Posterior vena cava (tissue), 2 donors: ENCODE measurements at regions of chr13 and their contacts with region 1.

Region 1: GRCh38 chr13:99176309-99177276 is 24.1 kb upstream of the UBAC2 start:
- DNase-seq: peak; percentile 89

Region 2: GRCh38 chr13:98977568-98978265 is 198.9 kb before region 1 on chr13 and contains the start of gene DOCK9:
- intact Hi-C with region 1: no loop called
- DNase-seq: no peak
- total RNA-seq, gene DOCK9: 85.3 to 91.7 TPM

Region 3: GRCh38 chr13:99269627-99270241 is 93.1 kb after region 1 on chr13:
- intact Hi-C with region 1: loop called in 1 of 2 experiments (anchors 5 kb)
- DNase-seq: no peak